GM12878 (cell line): ENCODE measurements at regions of chr3 and their contacts with region 1.

Region 1: DNA sequence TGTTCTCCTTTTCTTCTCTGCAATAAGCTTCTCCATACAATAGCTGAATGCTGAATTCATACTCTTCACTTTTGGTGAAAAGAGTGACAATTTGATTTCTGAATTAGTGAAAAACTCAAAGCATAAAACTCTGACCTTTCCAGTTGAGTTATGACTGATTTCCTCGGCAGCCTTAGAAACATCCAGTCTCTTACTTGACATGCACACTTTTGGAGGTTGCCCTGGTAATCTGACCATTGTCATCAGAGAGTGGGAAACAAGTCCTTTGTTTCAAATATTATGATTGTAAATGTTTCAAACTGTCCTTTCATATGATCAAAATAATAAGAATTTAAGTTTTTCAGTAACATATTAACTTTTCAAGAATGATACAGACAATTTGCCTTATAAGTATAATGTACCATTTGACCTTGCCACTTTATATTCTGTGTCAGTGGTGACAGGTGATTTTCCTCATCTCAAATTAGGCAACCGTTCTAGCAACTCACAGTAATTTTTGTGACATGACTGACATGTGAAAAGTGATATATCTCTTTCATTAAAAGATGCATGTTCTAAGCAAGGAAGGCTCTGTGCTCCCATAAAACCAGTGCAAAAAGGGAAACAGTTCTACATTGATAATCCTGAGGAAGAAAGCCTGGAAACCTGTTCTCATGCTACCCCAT is 507.6 kb upstream of the ROBO2 start:
- DNase-seq: no peak
- ATAC-seq: no peak
- H3K4me3 ChIP-seq: no peak overlapping the region
- H3K27ac ChIP-seq: no peak overlapping the region
- H3K4me1 ChIP-seq: no peaks in the 10 kb centered on the region
- H3K27me3 ChIP-seq: no peaks in the 10 kb centered on the region
- CTCF ChIP-seq: no peak
- EP300 ChIP-seq: no peak
- POLR2A ChIP-seq: no peak
- RAD21 ChIP-seq: no peak

Region 2: DNA sequence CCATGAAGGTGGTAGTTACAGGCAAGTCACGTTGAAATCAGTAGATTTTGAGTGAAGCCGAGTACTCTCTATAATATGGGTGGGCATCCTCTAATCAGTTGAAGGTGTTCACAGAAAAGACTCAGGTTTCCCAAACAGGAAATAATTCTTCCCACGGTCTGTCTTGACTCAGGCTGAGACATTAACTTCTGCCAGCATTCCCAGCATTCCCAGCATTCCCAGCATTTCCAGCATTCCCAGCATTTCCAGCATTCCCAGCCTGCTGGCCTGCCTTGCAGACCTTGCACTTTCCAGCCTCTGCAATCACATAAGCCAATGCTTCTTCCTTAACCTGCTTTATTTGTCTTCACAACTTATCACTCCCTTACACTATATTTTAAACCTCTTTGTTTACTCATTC is 34.7 kb before region 1 on chr3:
- CTCF ChIA-PET with region 1: no interaction called
- POLR2A ChIA-PET with region 1: no interaction called
- RAD21 ChIA-PET with region 1: no interaction called
- SMC1A ChIA-PET with region 1: no interaction called
- in situ Hi-C with region 1: no loop called
- intact Hi-C with region 1: no loop called
- DNase-seq: no peak
- ATAC-seq: no peak
- H3K4me3 ChIP-seq: no peak overlapping the region
- H3K27ac ChIP-seq: no peak overlapping the region
- H3K4me1 ChIP-seq: no peaks in the 10 kb centered on the region
- H3K27me3 ChIP-seq: no peaks in the 10 kb centered on the region
- CTCF ChIP-seq: no peak
- EP300 ChIP-seq: no peak
- POLR2A ChIP-seq: no peak
- RAD21 ChIP-seq: no peak

Region 3: DNA sequence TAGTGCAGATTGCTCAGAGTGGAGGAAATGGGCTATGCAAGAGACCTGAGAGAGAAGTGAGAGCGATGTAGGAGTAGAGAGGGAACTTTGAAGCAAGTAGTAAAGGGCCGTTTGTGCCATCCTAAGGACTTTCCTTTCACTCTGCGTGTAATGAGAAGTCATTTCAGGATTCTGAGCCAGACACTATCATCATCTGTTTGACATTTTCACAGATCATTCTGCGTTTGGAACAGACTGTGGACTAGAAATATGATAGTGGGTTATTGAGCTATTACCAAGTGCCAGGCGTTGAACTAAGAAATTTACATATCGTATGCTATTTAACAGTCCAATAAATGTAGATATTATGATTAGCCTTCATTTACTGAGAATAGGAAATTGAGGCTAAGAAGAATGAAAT is 357.6 kb after region 1 on chr3:
- CTCF ChIA-PET with region 1: no interaction called
- POLR2A ChIA-PET with region 1: no interaction called
- RAD21 ChIA-PET with region 1: no interaction called
- SMC1A ChIA-PET with region 1: no interaction called
- in situ Hi-C with region 1: no loop called
- intact Hi-C with region 1: loop called (anchors 5 kb)
- DNase-seq: no peak
- ATAC-seq: no peak; the same call in 2 of the 3 replicates
- H3K4me3 ChIP-seq: no peak overlapping the region
- H3K27ac ChIP-seq: no peak overlapping the region
- H3K4me1 ChIP-seq: no peaks in the 10 kb centered on the region
- H3K27me3 ChIP-seq: no peaks in the 10 kb centered on the region
- CTCF ChIP-seq: no peak
- EP300 ChIP-seq: no peak
- POLR2A ChIP-seq: no peak
- RAD21 ChIP-seq: no peak